ENCODE measurements at regions of chr20 and their contacts with region 1.

Region 1: GRCh38 chr20:57186737-57187599 is 79.5 kb downstream of the BMP7 start:
- DNase-seq: no peak
- ATAC-seq: no peak
- H3K4me3 ChIP-seq: no peak overlapping the region
- H3K27ac ChIP-seq: no peak overlapping the region
- H3K4me1 ChIP-seq: no peaks in the 10 kb centered on the region
- H3K27me3 ChIP-seq: no peaks in the 10 kb centered on the region
- CTCF ChIP-seq: no peak

Region 2: DNA sequence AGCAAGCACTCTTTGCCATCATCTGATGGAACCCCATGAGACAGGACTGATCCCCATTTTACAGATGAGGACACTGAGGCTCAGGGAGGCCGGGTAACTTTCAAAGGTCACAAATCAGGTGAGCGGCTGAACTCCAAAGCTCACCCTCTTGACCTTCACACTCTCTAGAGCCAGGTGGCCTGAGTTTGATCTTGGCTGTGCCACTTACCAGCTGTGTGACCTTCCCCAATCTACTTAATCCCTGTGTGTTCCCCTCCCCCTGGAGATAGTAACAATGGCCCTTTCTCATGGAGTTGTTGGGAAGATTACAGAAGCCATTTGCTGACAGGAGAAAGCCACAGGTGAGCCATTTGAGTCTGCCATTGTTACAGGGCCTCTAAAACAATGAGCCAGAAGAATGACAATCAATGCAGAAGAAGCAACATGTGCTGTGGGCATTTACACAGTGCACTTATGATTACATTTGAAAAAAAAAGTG is 45.0 kb after region 1 on chr20:
- CTCF ChIA-PET with region 1: no interaction called
- POLR2A ChIA-PET with region 1: interaction called, 14 read pairs
- in situ Hi-C with region 1: no loop called
- intact Hi-C with region 1: no loop called
- DNase-seq: no peak
- ATAC-seq: no peak
- H3K4me3 ChIP-seq: no peak overlapping the region
- H3K27ac ChIP-seq: no peak overlapping the region
- H3K4me1 ChIP-seq: no peaks in the 10 kb centered on the region; the same call in 1 of the 2 replicates
- H3K27me3 ChIP-seq: no peaks in the 10 kb centered on the region; the same call in 1 of the 2 replicates
- CTCF ChIP-seq: no peak